ENCODE measurements at regions of chr15 and their contacts with region 1.

Region 1: DNA sequence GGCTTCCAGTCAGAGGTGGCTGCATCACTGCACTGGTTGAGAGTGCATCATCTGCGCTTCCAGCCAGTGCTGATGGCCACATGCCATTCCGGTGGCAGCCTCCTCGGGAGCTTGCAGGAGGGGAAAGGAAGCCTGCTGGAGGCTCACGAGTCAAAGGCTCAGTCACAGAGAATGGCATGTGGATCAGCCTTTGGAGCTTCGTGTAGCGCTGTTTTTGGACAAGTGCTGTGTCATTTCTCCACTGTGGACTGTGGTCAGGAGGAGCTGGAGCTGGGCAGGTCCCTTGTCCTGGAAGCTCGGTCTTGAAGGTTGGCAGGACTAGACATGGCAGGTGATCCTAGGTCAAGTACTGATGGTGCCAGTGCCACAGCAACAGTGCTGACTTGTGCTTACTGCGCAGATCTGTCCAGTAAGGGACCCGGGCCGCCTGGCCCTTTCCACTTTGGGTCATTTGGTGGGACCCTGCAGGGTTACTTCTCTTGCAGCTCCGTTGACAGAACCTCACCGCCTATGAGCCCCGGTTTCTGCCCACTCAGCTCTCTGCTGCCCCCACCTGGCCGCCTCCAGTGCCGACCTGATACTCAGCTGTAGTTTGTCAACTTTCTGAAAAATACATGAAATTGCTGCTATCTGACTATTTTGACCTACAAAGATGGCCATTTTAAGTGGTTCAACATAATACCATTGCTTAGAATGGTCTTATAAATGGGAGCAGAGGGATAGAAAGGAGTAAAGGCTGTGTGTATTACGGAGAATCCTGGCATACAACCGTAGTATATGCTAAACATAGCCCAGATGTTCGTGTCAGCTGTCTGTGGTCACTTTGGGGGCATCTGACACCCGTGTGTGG is 27.6 kb upstream of the TRPM1 start:
- DNase-seq: peak; percentile 81
- CTCF ChIP-seq: peak; percentile 88

Region 2: GRCh38 chr15:30896211-30896606 is 232.9 kb before region 1 on chr15:
- CTCF ChIA-PET with region 1: interaction called, 37 read pairs
- POLR2A ChIA-PET with region 1: no interaction called
- DNase-seq: no peak
- CTCF ChIP-seq: no peak

Region 3: DNA sequence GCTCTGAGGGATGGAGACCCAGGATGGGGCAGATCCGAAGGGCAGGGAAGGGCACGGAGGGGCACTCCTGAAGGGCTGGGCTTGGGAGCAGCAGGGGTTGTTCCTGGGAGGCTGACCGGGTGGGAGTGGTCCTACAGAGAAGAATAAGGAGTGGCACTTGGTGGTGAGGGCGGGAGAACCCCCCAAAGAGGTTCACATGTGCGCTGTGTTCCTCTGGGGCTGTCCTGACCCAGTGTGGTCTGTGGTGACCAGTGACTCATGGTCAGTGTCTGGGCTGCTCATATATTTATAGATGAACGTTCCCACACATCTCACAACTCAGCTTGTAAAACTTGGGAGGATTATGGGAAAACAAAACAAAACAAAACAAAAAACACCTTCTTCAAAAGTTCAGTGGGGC is 37.7 kb before region 1 on chr15:
- CTCF ChIA-PET with region 1: interaction called, 12 read pairs
- POLR2A ChIA-PET with region 1: no interaction called
- DNase-seq: no peak
- CTCF ChIP-seq: no peak

Region 4: DNA sequence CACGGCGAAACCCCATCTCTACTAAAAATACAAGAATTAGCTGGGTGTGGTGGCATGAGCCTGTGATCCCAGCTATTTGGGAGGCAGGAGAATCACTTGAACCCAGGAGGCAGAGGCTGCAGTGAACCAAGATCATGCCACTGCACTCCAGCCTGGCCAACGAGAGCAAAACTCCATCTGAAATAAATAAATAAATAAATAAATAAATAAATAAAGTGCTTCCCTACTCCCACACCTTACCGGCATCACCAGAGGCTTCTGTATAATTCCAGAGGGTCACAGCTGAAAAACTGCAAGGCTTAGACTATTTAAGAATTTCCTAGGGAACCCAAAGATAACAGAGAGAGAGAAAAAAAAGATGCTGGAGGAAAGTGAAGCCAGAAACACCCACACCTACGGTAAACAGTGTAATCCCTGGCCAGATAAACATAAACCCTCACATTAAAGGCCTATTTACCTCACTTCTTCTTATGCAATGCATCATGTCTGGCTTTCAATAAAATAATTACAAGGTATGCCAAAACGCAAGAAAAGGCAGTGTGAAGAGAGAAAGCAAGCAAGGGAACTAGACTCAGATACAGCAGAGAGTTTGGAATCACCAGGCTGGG is 12.6 kb before region 1 on chr15:
- CTCF ChIA-PET with region 1: interaction called, 41 read pairs
- POLR2A ChIA-PET with region 1: no interaction called
- DNase-seq: no peak
- CTCF ChIP-seq: no peak

Region 5: DNA sequence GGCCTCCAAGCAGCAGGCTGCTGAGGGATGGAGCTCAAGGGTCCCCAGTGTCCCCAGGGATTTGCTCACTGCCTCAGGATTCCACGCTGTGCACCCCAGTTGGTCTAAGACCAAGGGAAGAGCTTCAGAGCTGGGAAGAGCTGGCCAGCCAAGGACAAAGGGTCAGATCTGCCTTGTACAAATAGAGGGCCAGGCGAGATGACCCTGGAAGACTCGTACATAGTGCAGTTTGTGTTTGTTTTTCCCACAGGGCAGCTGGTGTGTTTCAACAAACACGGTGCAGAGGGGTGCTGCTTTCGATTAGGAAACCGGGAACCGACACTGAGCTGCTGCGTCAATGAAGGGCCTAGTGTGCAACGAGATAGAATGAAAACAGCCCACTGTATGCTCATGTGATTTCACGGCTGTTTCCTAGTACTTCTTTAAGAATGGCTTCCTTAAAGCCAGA is 28.5 kb after region 1 on chr15:
- CTCF ChIA-PET with region 1: interaction called, 25 read pairs
- POLR2A ChIA-PET with region 1: no interaction called
- DNase-seq: no peak
- CTCF ChIP-seq: no peak

Measured in GM10248 (cell line).